ENCODE measurements at regions of chr2 and their contacts with region 1.

Region 1: GRCh38 chr2:234963773-234964615 is 12.2 kb downstream of the SH3BP4 start:
- DNase-seq: peak in 4 of 42 donors; percentile 2 to 30 (median 16)

Region 2: GRCh38 chr2:234846599-234847363 is 117.2 kb before region 1 on chr2:
- intact Hi-C with region 1: no loop called
- DNase-seq: no peak

Region 3: GRCh38 chr2:235011929-235012631 is 48.1 kb after region 1 on chr2:
- intact Hi-C with region 1: no loop called
- DNase-seq: no peak

Region 4: GRCh38 chr2:235034265-235035118 is 70.5 kb after region 1 on chr2:
- intact Hi-C with region 1: loop called (anchors 10 kb)
- DNase-seq: peak in 19 of 42 donors; percentile 23 to 66 (median 29)